Heart right ventricle (tissue), 16 donors: ENCODE measurements at regions of chr7 and their contacts with region 1.

Region 1: DNA sequence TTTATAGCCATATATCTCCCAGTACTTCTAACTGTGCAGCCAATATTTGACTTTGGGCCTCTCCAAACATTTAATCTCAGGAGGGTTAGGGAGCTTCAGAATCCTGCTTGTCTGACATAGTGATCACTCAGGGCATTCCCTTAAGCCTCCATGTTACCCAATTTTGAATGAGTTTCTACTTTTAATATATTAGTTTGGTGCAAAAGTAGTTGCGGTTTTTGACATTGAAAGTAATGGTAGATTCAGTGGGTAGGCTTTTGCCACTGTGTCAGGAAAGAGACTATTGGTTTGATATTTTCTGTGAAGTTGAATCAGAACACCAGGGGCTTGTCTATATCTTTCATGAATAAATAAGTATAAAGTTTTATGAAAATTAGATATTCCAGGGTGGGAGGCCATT is 85.9 kb upstream of the PTPRZ1 start:
- DNase-seq: no peak
- ATAC-seq: no peak
- H3K4me3 ChIP-seq: no peak overlapping the region
- H3K27ac ChIP-seq: no peak overlapping the region
- H3K4me1 ChIP-seq: no peaks in the 10 kb centered on the region
- H3K27me3 ChIP-seq: no peaks in the 10 kb centered on the region
- CTCF ChIP-seq: no peak

Region 2: GRCh38 chr7:121113288-121113687 is 673.8 kb before region 1 on chr7:
- intact Hi-C with region 1: no loop called
- DNase-seq: no peak
- ATAC-seq: no peak
- H3K4me3 ChIP-seq: no peak overlapping the region
- H3K27ac ChIP-seq: no peak overlapping the region
- H3K4me1 ChIP-seq: peaks cover 0 to 5% (median 0%) of the 10 kb centered on the region in 9 donors
- H3K27me3 ChIP-seq: no peaks in the 10 kb centered on the region
- CTCF ChIP-seq: no peak

Region 3: DNA sequence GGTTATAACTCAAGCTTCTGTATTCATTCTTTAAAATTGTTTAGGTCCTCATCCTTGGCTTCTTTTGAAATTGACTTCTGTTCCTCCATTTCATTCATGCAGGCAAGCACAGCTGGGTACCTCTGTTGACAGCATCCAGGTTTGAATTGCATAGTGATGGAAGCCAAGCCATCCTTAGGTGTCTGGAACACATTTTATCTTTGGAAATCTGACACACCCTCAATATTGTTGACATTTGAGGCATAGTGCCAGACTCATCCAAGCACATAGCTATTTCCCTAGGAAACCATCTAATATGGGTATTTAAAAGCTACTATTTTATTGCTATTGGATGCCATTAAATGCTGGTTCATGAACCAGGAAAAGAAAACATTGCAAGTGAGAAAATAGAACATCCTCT is 56.2 kb before region 1 on chr7:
- intact Hi-C with region 1: loop called in 1 of 10 experiments (anchors 10 kb)
- DNase-seq: no peak
- ATAC-seq: no peak
- H3K4me3 ChIP-seq: no peak overlapping the region
- H3K27ac ChIP-seq: no peak overlapping the region
- H3K4me1 ChIP-seq: no peaks in the 10 kb centered on the region
- H3K27me3 ChIP-seq: no peaks in the 10 kb centered on the region
- CTCF ChIP-seq: no peak

Region 4: GRCh38 chr7:121832347-121832746 is 45.3 kb after region 1 on chr7:
- intact Hi-C with region 1: no loop called
- DNase-seq: no peak
- ATAC-seq: no peak
- H3K4me3 ChIP-seq: no peak overlapping the region
- H3K27ac ChIP-seq: no peak overlapping the region
- H3K4me1 ChIP-seq: no peaks in the 10 kb centered on the region
- H3K27me3 ChIP-seq: no peaks in the 10 kb centered on the region
- CTCF ChIP-seq: no peak

Region 5: DNA sequence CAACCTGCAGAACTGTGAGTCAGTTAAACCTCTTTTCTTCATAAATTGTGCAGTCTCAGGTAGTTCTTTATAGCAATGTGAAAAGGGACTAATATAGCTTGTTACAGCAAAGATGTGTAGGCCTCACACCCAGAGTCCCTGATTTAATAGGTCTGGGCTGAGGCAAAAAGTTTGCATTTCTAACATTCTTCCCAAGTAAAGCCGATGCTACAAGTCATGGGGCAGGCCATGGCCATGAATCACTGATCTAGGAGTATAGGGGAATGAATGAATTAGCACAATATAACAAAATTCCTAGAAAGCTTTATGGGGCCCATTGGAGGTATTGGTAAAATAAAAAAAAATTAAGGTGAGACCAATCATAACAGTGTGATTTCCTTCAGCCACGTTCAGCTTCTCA is 368.5 kb after region 1 on chr7:
- intact Hi-C with region 1: no loop called
- DNase-seq: no peak
- ATAC-seq: no peak
- H3K4me3 ChIP-seq: no peak overlapping the region
- H3K27ac ChIP-seq: no peak overlapping the region
- H3K4me1 ChIP-seq: no peaks in the 10 kb centered on the region
- H3K27me3 ChIP-seq: no peaks in the 10 kb centered on the region
- CTCF ChIP-seq: no peak